Activated CD4-positive, alpha-beta T cell treated with anti-CD3 and anti-CD28 coated beads for 36 hours (primary cell): ENCODE measurements at regions of chr10 and their contacts with region 1.

Region 1: DNA sequence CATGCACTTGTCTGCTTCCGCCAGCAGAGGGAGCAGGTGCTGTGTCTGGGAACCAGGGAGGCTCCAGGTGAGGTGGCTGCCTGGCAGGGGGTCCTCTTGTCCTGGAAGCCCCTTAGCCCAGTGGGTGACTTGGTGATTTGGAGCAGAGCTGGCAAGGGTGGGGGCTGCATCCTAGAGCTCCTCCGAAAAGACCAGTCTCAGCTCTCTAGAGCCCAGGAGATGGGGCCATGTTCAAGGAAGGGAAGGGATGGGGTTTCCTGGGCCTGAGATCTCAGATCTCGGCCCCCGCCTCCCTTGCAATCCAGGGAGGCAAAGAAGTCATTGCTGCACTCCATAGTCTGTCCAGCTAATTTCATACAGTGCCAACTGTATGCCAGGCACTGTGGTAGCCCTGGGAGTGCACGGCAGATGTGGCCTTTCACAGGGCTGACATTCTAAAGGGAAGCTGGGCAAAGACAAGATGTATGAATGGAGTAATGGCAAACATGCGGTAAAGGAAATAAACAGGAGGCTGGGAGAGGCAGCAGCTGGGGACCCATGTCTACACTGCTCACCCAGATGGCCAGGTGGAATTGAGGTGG is 20.4 kb upstream of the SFRP5 start:
- DNase-seq: peak; percentile 85
- ATAC-seq: peak; percentile 81
- H3K4me3 Mint-ChIP-seq: no peak overlapping the region
- H3K27ac Mint-ChIP-seq: no peak overlapping the region
- H3K4me1 Mint-ChIP-seq: peaks cover 19% of the 10 kb centered on the region
- H3K27me3 Mint-ChIP-seq: no peaks in the 10 kb centered on the region

Region 2: GRCh38 chr10:97499561-97500296 is 292.5 kb before region 1 on chr10:
- CTCF ChIA-PET with region 1: no interaction called
- POLR2A ChIA-PET with region 1: no interaction called
- intact Hi-C with region 1: no loop called
- DNase-seq: no peak
- ATAC-seq: no peak
- H3K4me3 Mint-ChIP-seq: peak overlapping the region; percentile 53
- H3K27ac Mint-ChIP-seq: no peak overlapping the region
- H3K4me1 Mint-ChIP-seq: peaks cover 29% of the 10 kb centered on the region
- H3K27me3 Mint-ChIP-seq: peaks cover 20% of the 10 kb centered on the region

Region 3: GRCh38 chr10:97849687-97850402 is 57.6 kb after region 1 on chr10 and contains the start of gene GOLGA7B:
- CTCF ChIA-PET with region 1: interaction called, 5 read pairs
- POLR2A ChIA-PET with region 1: no interaction called
- intact Hi-C with region 1: loop called in 1 of 2 experiments (anchors 5 kb)
- DNase-seq: peak; percentile 76
- ATAC-seq: peak; percentile 73
- H3K4me3 Mint-ChIP-seq: peak within 1 kb of the TSS; percentile 77
- H3K27ac Mint-ChIP-seq: peak within 1 kb of the TSS; percentile 24
- H3K4me1 Mint-ChIP-seq: peaks cover 35% of the 10 kb centered on the region
- H3K27me3 Mint-ChIP-seq: no peaks in the 10 kb centered on the region
- total RNA-seq, gene GOLGA7B: 0.47 to 0.57 TPM